ENCODE measurements at regions of chr9 and their contacts with region 1.

Region 1: DNA sequence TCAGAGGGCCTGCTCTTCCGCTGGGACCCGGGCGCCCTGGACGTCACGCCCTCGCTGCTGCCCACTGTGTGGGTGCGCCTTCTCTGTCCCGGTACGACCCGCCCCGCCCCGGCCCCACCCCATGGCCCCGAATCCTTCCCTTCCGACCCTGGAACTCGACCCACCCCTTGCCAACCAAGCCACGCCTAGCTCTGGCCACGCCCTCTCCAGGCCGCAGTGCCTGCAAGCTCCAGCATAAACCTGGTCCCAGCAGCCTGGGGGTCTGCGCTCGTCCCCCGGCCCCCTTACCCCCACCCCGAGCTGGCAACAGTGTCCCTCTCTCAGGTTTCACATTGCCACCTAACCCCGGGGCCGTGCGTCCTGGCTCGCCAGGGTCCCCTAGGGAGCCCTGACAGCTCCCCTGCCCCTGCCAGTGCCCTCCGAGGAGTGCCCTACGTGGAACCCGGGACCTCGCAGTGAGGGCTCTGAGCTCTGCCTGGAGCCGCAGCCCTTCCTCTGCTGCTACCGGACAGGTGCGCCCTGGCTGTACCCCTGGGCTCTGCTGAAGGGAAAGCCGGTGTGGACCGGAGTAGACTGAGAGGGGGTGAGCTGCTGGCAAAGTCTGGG is 3.4 kb downstream of the ADGRD2 start:
- DNase-seq: peak in 1 of 2 experiments; percentile 59
- H3K4me3 ChIP-seq: no peak overlapping the region
- H3K27ac ChIP-seq: no peak overlapping the region
- H3K4me1 ChIP-seq: no peaks in the 10 kb centered on the region
- H3K27me3 ChIP-seq: no peaks in the 10 kb centered on the region
- CTCF ChIP-seq: no peak

Region 2: DNA sequence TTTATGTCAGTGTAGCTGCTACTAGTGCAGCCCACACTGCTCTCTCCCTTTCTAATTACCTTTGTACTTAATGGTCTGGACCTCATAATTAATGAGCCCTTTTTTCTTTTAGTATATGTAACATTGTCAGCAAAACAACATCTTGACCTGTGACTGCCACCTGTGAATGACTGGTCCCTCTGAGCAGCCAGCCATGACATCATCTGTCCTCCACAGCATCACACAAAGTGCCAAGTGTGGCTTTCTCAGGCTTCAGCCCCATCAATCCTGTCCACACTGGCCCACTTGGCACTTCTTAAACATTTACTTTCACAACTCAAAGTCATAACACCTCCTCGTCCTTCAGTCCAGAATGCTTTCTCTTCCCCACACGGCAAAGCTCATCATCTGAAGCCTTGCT is 1315.5 kb before region 1 on chr9:
- CTCF ChIA-PET with region 1: no interaction called
- POLR2A ChIA-PET with region 1: no interaction called
- intact Hi-C with region 1: no loop called
- DNase-seq: no peak
- H3K4me3 ChIP-seq: no peak overlapping the region
- H3K27ac ChIP-seq: no peak overlapping the region
- H3K4me1 ChIP-seq: no peaks in the 10 kb centered on the region
- H3K27me3 ChIP-seq: no peaks in the 10 kb centered on the region
- CTCF ChIP-seq: no peak

Region 3: DNA sequence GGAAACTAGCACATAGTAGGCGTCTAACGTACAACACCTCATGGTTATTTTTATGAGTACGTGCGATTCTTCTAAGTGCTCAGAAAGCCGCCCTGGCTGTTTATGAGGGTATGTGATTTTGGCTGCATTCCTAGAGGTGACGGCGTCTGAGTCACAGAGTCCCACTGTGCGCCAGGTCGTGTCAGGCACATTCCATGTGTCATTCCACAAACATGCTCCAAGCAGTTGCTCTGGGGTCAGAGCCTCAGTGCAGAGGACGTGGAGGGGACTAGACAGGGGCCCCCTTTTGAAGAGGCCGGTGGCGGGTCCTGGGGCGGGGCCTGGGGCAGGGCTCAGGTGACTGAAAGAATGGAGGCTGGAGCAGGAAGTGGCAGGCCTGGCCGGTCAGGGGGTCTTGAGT is 144.0 kb before region 1 on chr9:
- CTCF ChIA-PET with region 1: no interaction called
- POLR2A ChIA-PET with region 1: no interaction called
- intact Hi-C with region 1: no loop called
- DNase-seq: peak; percentile 92 to 96
- H3K4me3 ChIP-seq: no peak overlapping the region
- H3K27ac ChIP-seq: peak overlapping the region; percentile 13; the same call in 1 of the 2 replicates
- H3K4me1 ChIP-seq: peaks cover 37% of the 10 kb centered on the region
- H3K27me3 ChIP-seq: no peaks in the 10 kb centered on the region
- CTCF ChIP-seq: no peak

Region 4: GRCh38 chr9:124415102-124415851 is 38.4 kb before region 1 on chr9 and contains the start of gene PSMB7:
- CTCF ChIA-PET with region 1: no interaction called
- POLR2A ChIA-PET with region 1: no interaction called
- intact Hi-C with region 1: no loop called
- DNase-seq: peak; percentile 91 to 96
- H3K4me3 ChIP-seq: peak within 1 kb of the TSS; percentile 90
- H3K27ac ChIP-seq: peak within 1 kb of the TSS; percentile 71
- H3K4me1 ChIP-seq: peaks cover 35% of the 10 kb centered on the region
- H3K27me3 ChIP-seq: no peaks in the 10 kb centered on the region
- CTCF ChIP-seq: peak; percentile 87
- total RNA-seq, gene PSMB7: 328 and 359 TPM in 2 replicates

Region 5: GRCh38 chr9:124493794-124494479 is 40.2 kb after region 1 on chr9:
- CTCF ChIA-PET with region 1: no interaction called
- POLR2A ChIA-PET with region 1: no interaction called
- intact Hi-C with region 1: no loop called
- DNase-seq: no peak
- H3K4me3 ChIP-seq: no peak overlapping the region
- H3K27ac ChIP-seq: no peak overlapping the region
- H3K4me1 ChIP-seq: no peaks in the 10 kb centered on the region
- H3K27me3 ChIP-seq: peaks cover 31% of the 10 kb centered on the region
- CTCF ChIP-seq: no peak

Region 6: DNA sequence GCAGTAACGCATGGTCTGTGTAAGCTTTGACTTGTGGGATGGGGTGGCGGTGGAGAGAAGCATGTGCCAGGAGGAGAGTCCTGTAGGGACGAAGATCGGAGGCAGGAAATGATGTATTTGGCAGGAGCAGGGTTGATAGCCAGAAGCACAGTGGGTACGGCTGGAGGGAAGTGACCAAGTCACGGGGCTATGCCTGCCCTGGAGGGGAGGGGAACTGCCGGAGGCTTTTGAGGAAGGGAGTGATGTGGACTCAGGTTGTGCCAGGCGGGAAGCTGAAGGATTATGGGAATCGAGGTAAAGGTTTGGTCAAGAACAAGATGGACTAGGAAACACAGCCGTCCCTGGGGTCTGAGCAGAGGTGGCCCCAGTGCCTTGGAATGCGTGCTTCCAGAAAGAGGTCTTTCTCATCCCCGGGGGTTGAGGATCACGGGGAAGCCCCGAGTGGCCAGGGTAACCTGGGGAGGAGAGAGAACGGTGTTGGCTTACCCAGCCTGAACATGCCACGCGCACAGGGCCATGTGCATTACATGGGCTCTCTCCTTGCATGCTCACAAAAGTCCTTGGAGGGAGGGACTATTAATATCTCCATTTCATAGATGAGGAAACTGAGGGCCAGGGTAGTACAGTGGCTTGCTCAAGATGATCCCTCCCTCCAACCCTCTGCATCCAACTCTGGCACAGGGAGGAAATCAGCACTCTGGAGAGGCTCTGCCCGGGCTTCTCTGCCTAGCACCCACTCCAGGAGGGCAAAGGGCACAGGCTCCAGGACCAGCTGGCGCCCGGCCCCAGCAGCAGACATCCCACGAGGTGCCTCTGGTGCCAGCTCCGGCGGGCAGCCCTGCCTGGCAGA is 1547.3 kb after region 1 on chr9:
- CTCF ChIA-PET with region 1: interaction called, 10 read pairs
- POLR2A ChIA-PET with region 1: no interaction called
- intact Hi-C with region 1: no loop called
- DNase-seq: no peak
- H3K4me3 ChIP-seq: no peak overlapping the region
- H3K27ac ChIP-seq: no peak overlapping the region
- H3K4me1 ChIP-seq: no peaks in the 10 kb centered on the region
- H3K27me3 ChIP-seq: peaks cover 13% of the 10 kb centered on the region; the same call in 1 of the 2 replicates
- CTCF ChIP-seq: no peak

Measured in PC-9 (cell line).